ENCODE measurements at regions of chr7 and their contacts with region 1.

Region 1: DNA sequence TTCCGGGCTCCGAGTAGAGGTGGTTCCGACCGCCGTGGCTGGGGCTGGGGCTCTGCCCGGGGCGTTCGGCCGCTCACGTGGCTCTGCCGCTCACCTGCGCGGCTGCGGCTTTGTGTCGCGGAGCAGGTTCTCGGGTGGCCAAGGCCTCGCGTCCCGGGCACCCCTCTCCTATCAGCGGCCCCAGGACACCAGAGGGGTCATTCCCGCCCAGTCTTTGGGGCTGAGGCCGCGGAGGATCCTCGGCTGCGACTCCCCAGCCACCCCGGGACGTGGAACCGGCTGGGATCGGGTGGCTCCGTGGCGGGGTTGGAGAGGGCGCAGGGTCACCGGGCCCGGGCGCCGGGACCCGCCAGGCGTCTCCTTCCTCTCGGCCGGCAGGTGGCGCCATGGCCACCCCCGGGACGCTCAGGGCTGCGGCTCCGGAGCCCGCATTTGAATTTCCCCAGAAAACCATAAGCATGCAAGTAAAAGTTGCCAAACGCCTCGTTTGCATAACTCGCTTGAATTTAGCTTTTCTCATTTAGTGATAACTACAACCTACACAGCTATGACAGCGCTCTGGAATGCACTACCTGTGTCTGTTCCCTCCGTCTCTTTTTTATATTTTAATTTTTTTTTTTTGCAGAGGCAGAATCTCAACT is 1.2 kb downstream of the COL26A1 start:
- DNase-seq: peak; percentile 54
- H3K4me3 Mint-ChIP-seq: no peak overlapping the region
- H3K27ac Mint-ChIP-seq: no peak overlapping the region
- H3K4me1 Mint-ChIP-seq: no peaks in the 10 kb centered on the region
- H3K27me3 Mint-ChIP-seq: peaks cover 36% of the 10 kb centered on the region

Region 2: GRCh38 chr7:100586266-100587025 is 777.4 kb before region 1 on chr7 and contains the start of gene FBXO24:
- intact Hi-C with region 1: no loop called
- DNase-seq: peak; percentile 100
- H3K4me3 Mint-ChIP-seq: peak within 1 kb of the TSS; percentile 87
- H3K27ac Mint-ChIP-seq: peak within 1 kb of the TSS; percentile 89
- H3K4me1 Mint-ChIP-seq: peaks cover 23% of the 10 kb centered on the region
- H3K27me3 Mint-ChIP-seq: peaks cover 3% of the 10 kb centered on the region
- total RNA-seq, gene FBXO24: 0.27 and 0.41 TPM in 2 replicates

Region 3: GRCh38 chr7:101410743-101411507 is 47.1 kb after region 1 on chr7:
- intact Hi-C with region 1: loop called (anchors 1 kb)
- DNase-seq: peak; percentile 20
- H3K4me3 Mint-ChIP-seq: no peak overlapping the region
- H3K27ac Mint-ChIP-seq: no peak overlapping the region
- H3K4me1 Mint-ChIP-seq: peaks cover 7% of the 10 kb centered on the region
- H3K27me3 Mint-ChIP-seq: no peaks in the 10 kb centered on the region

Region 4: DNA sequence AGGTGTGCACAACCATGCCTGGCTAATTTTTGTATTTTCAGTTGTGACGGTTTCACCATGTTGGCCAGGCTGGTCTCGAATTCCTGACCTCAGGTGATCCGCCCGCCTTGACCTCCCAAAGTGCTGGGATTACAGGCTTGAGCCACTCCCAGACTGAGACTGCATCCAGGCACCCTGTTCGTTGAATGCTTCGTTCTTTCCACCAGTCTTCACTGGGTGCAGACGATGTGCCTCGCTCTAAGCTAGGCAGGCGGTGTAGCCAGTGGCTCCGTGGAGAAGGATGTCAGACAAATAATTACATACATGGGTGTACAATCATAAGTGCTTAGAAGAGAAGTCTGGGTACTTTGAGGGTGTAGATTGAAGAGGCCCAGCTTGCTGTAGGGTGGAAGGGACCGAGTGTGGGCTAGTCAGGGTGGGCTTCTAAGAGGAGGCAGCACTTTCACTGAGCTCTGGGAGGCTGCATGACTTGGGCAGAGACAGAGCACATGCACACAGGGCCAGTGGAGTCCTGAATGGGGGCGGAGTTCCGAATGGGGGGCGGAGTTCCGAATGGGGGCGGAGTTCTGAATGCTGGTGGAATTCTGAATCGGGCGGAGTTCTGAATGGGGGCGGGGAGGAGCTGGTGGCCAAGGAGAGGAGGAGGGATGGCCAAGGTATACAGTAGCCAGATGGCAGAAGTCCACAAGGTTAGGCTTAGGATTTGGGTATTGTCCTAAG is 73.2 kb after region 1 on chr7:
- intact Hi-C with region 1: loop called (anchors 1 kb)
- DNase-seq: no peak
- H3K4me3 Mint-ChIP-seq: no peak overlapping the region
- H3K27ac Mint-ChIP-seq: no peak overlapping the region
- H3K4me1 Mint-ChIP-seq: peaks cover 4% of the 10 kb centered on the region
- H3K27me3 Mint-ChIP-seq: peaks cover 15% of the 10 kb centered on the region

Region 5: GRCh38 chr7:101507791-101508252 is 144.0 kb after region 1 on chr7:
- intact Hi-C with region 1: loop called (anchors 1 kb)
- DNase-seq: peak; percentile 23
- H3K4me3 Mint-ChIP-seq: peak overlapping the region; percentile 56
- H3K27ac Mint-ChIP-seq: peak overlapping the region; percentile 59
- H3K4me1 Mint-ChIP-seq: peaks cover 32% of the 10 kb centered on the region
- H3K27me3 Mint-ChIP-seq: peaks cover 16% of the 10 kb centered on the region